ENCODE measurements at regions of chr14 and their contacts with region 1.

Region 1: DNA sequence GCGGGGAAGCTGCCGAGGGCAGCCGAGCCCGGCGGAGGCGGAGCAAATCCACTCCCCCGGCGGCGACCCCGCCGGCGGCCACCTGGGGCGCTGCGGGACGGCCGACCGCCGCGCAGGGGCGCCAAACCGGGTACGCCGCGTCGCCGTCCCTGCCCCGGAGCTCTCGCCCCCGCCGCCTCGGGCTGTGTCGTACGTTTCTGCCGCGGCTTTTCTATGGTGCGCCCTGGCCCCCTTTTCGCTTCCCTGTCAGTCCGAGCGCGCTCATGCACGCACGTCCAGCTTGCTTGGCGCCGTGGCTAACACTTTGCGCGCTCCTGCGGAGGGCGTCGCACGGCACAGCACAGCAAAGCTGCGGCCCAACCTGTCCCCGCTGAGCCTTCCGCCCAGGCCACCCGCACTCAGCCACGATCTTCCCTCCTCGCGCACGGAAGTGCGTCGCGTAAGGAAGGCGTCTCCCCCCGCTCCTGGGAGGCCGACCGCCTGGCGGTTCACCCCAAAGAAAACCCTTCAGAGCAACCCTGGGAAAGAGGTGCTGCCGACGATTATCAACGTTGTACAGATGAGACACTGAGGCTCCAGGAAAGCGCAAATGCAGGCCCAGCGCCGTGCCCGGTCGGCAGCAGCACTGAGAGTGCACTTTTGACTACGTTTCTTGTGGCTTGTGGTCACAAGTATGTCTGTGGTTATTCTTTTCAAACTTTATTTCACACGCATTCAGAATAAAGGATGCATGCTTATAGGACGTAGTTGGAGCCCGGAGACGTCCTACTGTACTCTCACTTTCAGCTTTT is at the start of gene HECTD1:
- DNase-seq: peak; percentile 77 to 93 (median 92)
- H3K4me3 ChIP-seq: peak within 1 kb of the TSS; percentile 27
- H3K4me3 Mint-ChIP-seq: peak within 1 kb of the TSS; percentile 89 to 98 (median 94)
- H3K27ac ChIP-seq: peak within 1 kb of the TSS; percentile 96
- H3K27ac Mint-ChIP-seq: peak within 1 kb of the TSS; percentile 97 to 100 (median 100)
- H3K4me1 ChIP-seq: peaks cover 38% of the 10 kb centered on the region
- H3K4me1 Mint-ChIP-seq: peaks cover 51 to 69% (median 65%) of the 10 kb centered on the region in 3 donors
- H3K27me3 ChIP-seq: no peaks in the 10 kb centered on the region
- H3K27me3 Mint-ChIP-seq: peaks cover 0 to 5% of the 10 kb centered on the region in 2 donors
- total RNA-seq, gene HECTD1: 101 to 112 TPM

Region 2: DNA sequence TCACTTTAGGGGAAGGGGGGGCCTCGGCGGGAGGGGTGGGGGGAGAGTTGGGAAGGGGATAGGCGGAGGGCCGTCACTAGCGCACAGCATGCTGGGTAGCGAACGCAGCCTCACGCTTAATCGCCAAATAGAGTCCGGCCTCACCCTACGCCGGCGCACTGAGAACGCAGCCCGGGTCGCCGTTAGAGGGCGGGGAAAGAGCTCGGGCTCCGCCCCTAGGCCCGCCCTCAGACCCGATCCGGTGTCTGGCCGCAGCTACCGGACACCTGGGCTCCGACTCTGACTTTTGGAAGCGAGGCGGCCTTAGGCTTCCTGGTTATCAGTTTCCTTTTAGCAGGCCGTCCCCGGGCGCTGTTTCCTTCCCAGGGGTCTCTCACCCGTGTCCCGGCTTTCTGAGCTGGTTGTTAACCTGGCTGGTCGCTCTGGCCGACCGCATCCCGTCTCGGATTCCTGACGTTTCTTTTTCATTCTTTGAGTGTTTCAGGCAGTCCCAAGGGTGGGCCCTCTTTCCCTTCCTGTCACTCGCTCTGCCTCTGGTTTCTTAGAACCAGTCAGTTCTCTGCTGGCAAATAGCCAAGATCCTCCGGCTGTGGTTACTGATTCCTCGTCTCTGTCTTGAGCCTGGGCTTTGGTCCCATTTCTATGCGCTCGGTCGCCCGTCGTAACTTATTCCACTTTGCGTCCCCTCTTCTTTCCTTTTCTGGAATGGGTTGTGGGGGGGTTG is 181.4 kb before region 1 on chr14:
- CTCF ChIA-PET with region 1: interaction called, 7 read pairs
- POLR2A ChIA-PET with region 1: interaction called, 22 read pairs
- DNase-seq: peak; percentile 82 to 91 (median 85)
- H3K4me3 ChIP-seq: peak overlapping the region; percentile 78
- H3K4me3 Mint-ChIP-seq: peak overlapping the region; percentile 93 to 100 (median 98)
- H3K27ac ChIP-seq: peak overlapping the region; percentile 79
- H3K27ac Mint-ChIP-seq: peak overlapping the region; percentile 88 to 99 (median 98)
- H3K4me1 ChIP-seq: peaks cover 19% of the 10 kb centered on the region
- H3K4me1 Mint-ChIP-seq: peaks cover 44 to 62% (median 50%) of the 10 kb centered on the region in 3 donors
- H3K27me3 ChIP-seq: no peaks in the 10 kb centered on the region
- H3K27me3 Mint-ChIP-seq: no peaks in the 10 kb centered on the region

Region 3: GRCh38 chr14:31127690-31128089 is 80.3 kb before region 1 on chr14:
- CTCF ChIA-PET with region 1: interaction called, 11 read pairs
- POLR2A ChIA-PET with region 1: interaction called, 21 read pairs
- DNase-seq: peak in 4 of 5 donors; percentile 19 to 89 (median 50)
- H3K4me3 ChIP-seq: no peak overlapping the region
- H3K4me3 Mint-ChIP-seq: peak overlapping the region; percentile 9 to 78 (median 46)
- H3K27ac ChIP-seq: peak overlapping the region; percentile 53
- H3K27ac Mint-ChIP-seq: peak overlapping the region; percentile 58 to 96 (median 88)
- H3K4me1 ChIP-seq: peaks cover 31% of the 10 kb centered on the region
- H3K4me1 Mint-ChIP-seq: peaks cover 42 to 66% (median 50%) of the 10 kb centered on the region in 3 donors
- H3K27me3 ChIP-seq: no peaks in the 10 kb centered on the region
- H3K27me3 Mint-ChIP-seq: no peaks in the 10 kb centered on the region

Region 4: DNA sequence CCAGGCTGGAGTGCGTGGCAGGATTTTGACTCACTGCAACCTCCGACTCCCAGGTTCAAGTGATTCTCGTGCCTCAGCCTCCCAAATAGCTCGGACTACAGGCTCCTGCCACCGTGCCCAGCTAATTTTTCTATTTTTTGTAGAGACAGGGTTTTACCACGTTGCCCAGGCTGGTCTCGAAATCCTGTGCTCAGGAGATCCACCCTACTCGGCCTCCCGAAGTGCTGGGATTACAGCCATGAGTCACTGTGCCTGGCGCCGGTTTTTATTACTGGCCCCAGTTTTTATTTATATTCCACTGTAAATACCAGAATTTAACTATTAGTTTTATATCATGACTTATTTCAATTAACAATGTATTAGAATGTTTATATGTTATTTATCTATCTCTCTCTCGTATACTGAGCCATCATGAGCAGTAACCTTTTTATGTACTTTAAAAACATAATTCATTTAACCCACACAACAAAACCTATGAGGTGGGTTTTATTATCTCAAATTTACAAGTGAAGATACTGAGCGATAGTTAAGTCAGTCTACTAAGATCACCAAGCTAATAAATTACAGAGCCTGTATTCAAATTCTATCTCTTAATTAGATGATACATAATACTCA is 48.2 kb before region 1 on chr14:
- CTCF ChIA-PET with region 1: no interaction called
- POLR2A ChIA-PET with region 1: no interaction called
- DNase-seq: no peak
- H3K4me3 ChIP-seq: no peak overlapping the region
- H3K4me3 Mint-ChIP-seq: peak overlapping the region in 1 of 7 donors; percentile 36
- H3K27ac ChIP-seq: no peak overlapping the region
- H3K27ac Mint-ChIP-seq: no peak overlapping the region
- H3K4me1 ChIP-seq: no peaks in the 10 kb centered on the region
- H3K4me1 Mint-ChIP-seq: peaks cover 0 to 3% (median 0%) of the 10 kb centered on the region in 3 donors
- H3K27me3 ChIP-seq: no peaks in the 10 kb centered on the region
- H3K27me3 Mint-ChIP-seq: no peaks in the 10 kb centered on the region

Region 5: GRCh38 chr14:31312934-31313333 is 105.0 kb after region 1 on chr14:
- CTCF ChIA-PET with region 1: no interaction called
- POLR2A ChIA-PET with region 1: no interaction called
- DNase-seq: no peak
- H3K4me3 ChIP-seq: no peak overlapping the region
- H3K4me3 Mint-ChIP-seq: no peak overlapping the region
- H3K27ac ChIP-seq: no peak overlapping the region
- H3K27ac Mint-ChIP-seq: peak overlapping the region in 2 of 8 donors; percentile 57 to 69
- H3K4me1 ChIP-seq: no peaks in the 10 kb centered on the region
- H3K4me1 Mint-ChIP-seq: no peaks in the 10 kb centered on the region
- H3K27me3 ChIP-seq: no peaks in the 10 kb centered on the region
- H3K27me3 Mint-ChIP-seq: peaks cover 0 to 2% of the 10 kb centered on the region in 2 donors

Region 6: DNA sequence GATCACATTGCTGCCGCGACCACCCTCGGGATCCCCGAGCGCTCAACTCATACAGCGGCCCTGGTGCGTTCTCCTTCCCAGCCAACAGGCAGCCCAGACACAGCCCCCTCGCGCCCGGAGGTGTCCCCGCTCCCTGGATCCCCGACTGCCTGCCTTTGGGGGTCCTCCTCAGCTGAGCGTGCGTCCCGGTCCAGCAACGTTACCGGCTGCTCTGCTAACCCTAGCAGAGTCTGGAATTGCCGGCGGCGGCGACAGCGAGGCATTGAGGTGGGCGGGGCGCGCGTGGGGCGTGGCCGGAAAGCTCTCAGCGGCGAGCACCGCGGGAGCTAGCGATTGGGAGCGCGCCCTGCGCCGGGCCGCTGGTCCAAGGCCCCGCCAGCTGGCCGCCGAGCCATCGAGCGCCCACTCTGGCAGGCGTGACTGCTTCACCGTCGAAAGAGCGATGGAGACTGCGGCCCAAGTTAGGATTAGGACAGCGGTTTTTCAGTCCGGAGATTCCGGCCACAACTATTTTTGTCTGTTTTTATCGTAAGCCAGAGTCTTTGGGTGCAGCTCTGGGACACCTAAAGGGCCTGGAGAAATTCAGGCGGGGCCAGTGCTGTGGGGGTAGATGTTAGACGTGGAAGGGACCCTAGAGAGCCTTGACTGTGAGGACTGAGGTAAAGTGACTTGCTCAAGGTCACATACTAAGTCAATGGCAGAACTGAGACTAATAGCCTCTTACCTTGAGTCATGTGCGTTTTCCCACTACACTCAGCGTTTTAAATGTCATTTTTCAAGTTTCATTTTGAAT is 212.6 kb after region 1 on chr14 and contains the start of gene HEATR5A:
- CTCF ChIA-PET with region 1: interaction called, 5 read pairs
- POLR2A ChIA-PET with region 1: interaction called, 21 read pairs
- DNase-seq: peak; percentile 87 to 93 (median 91)
- H3K4me3 ChIP-seq: peak within 1 kb of the TSS; percentile 93
- H3K4me3 Mint-ChIP-seq: peak within 1 kb of the TSS; percentile 96 to 100 (median 98)
- H3K27ac ChIP-seq: peak within 1 kb of the TSS; percentile 81
- H3K27ac Mint-ChIP-seq: peak within 1 kb of the TSS; percentile 54 to 98 (median 93)
- H3K4me1 ChIP-seq: peaks cover 9% of the 10 kb centered on the region
- H3K4me1 Mint-ChIP-seq: peaks cover 24 to 36% (median 30%) of the 10 kb centered on the region in 3 donors
- H3K27me3 ChIP-seq: no peaks in the 10 kb centered on the region
- H3K27me3 Mint-ChIP-seq: peaks cover 0 to 1% of the 10 kb centered on the region in 2 donors
- total RNA-seq, gene HEATR5A: 12.7 to 13.8 TPM